SK-N-SH (cell line): ENCODE measurements at regions of chr10 and their contacts with region 1.

Region 1: DNA sequence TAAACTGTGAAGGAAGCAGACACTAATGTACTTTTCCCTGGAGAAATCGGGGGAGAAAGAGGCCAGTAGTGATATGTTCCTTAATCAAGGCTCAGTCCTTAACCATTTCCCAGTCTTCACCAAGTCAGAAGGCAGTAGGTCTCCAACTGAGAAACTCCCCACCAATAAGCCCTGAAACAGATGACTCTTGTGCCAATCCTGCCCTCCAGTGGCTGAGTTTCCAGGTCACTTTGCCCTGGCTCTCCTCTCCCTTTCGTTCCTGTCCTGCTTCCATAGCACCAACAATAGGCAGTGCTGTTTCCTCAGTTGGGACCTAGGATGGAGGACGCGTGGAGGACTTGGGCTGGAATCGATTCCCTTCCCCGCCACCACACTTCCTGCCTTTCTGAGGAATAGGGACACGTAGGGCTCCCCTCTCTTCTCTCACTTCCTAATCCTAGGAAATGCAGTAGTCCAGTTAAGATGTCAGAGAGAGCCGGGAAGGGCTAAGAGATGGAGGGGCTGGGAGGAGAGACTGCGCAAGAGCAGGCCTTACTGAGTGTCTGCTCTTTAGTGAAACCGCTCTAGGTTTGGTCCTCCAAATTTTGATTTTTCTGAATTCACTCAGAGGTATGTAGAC is 23.4 kb downstream of the ATOH7 start:
- DNase-seq: peak; percentile 49
- H3K4me3 ChIP-seq: no peak overlapping the region
- H3K27ac ChIP-seq: no peak overlapping the region
- H3K4me1 ChIP-seq: no peaks in the 10 kb centered on the region
- H3K27me3 ChIP-seq: no peaks in the 10 kb centered on the region
- CTCF ChIP-seq: peak; percentile 68
- EP300 ChIP-seq: no peak
- RAD21 ChIP-seq: peak; percentile 82

Region 2: GRCh38 chr10:67827811-67828210 is 380.7 kb before region 1 on chr10:
- CTCF ChIA-PET with region 1: no interaction called
- POLR2A ChIA-PET with region 1: no interaction called
- DNase-seq: no peak
- H3K4me3 ChIP-seq: no peak overlapping the region
- H3K27ac ChIP-seq: no peak overlapping the region
- H3K4me1 ChIP-seq: no peaks in the 10 kb centered on the region; a peak in 1 of 4 replicates
- H3K27me3 ChIP-seq: no peaks in the 10 kb centered on the region
- CTCF ChIP-seq: no peak
- EP300 ChIP-seq: no peak
- RAD21 ChIP-seq: no peak

Region 3: DNA sequence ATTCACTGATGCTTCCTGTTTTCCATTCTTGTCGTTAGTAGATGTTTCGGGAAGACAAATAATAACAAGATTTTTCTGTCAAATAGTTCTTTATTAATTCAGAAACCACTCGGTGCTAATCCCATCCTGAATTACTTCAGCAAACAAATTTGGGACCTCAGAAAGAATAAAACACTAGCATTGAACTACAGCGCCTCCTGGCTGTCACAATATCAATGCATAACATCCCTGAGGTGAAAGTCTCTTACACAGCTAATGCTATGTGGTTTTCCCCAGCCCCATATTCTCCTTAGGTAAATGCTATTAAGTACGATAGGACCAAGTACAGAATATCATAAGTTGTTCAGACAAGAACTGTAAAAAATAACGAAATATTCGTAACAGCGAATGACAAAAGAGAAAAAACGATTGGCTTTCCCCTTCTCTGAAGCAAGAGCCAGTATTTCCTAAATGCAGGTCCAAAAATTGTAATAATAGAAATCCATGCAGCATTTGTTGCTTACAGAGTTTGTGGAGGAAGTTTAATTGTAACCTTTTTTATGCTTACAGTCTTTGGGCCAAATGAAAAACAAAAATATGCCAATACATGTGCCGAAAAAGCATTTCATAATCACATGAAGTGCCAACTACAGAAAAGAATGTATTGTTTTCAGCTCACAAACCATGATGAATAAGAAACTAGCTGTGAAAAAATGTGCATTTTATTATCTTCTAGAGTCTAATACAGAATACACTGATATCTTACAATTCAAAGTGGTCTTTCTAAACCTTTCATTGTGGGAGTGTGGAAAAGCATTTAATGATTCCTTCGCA is 52.0 kb before region 1 on chr10:
- CTCF ChIA-PET with region 1: interaction called, 15 read pairs
- POLR2A ChIA-PET with region 1: no interaction called
- DNase-seq: peak; percentile 35
- H3K4me3 ChIP-seq: no peak overlapping the region; a peak in 1 of 4 replicates
- H3K27ac ChIP-seq: no peak overlapping the region
- H3K4me1 ChIP-seq: peaks cover 11 to 27% of the 10 kb centered on the region in 2 experiments; a peak in 3 of 4 replicates
- H3K27me3 ChIP-seq: no peaks in the 10 kb centered on the region
- CTCF ChIP-seq: peak; percentile 93
- EP300 ChIP-seq: no peak
- RAD21 ChIP-seq: peak; percentile 86

Region 4: GRCh38 chr10:68231106-68231816 is 22.7 kb after region 1 on chr10:
- CTCF ChIA-PET with region 1: interaction called, 16 read pairs
- POLR2A ChIA-PET with region 1: no interaction called
- DNase-seq: peak; percentile 98
- H3K4me3 ChIP-seq: peak overlapping the region; percentile 59 to 68
- H3K27ac ChIP-seq: peak overlapping the region; percentile 42 to 84; a peak in 3 of 4 replicates
- H3K4me1 ChIP-seq: peaks cover 0 to 4% of the 10 kb centered on the region in 2 experiments; a peak in 2 of 4 replicates
- H3K27me3 ChIP-seq: no peaks in the 10 kb centered on the region; the same call in 1 of the 2 replicates
- CTCF ChIP-seq: no peak
- EP300 ChIP-seq: no peak
- RAD21 ChIP-seq: no peak

Region 5: DNA sequence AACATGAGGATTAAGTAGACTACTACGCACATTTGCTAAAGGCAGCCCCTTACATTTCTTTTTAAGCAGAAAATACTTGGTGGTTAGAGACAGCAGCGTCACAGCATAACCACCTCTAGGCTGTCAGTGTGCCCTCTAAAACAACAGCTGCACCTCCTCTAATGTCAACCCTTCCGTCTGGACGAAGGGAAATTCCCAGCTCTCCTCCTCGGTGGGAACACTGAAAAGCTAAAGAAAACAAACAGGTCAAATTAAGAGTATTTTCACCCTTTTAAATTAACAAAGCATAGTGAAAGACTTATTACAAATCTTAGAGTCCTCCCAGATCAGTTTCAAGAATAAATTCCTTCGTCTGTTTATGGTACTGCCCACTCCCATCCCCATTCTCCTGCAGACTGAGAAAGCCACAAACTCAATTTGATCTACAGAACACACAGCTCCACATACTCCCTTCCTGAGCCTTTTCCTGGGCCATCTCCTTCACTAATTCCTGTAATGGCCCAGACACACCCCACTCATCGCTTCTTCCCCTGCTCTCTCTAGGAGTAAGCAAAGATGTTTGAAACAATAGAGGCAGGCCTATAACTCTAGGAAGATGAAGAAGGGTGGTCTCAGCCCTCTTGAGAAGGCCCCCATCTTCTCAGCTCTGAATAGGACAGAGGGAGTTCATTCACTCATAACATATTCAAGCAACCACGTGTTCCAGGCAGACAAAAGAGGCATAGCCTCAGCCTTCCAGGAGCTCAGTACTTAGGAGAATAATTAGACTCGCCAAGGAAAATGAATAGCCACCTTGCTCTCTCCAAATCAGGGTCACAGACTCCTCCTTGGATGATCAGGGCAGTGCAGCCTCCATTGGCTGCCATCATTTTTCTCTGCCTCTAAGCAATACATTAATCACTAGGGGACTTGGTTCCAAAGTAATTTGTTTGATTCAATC is 75.8 kb after region 1 on chr10:
- CTCF ChIA-PET with region 1: interaction called, 14 read pairs
- POLR2A ChIA-PET with region 1: no interaction called
- DNase-seq: no peak
- H3K4me3 ChIP-seq: no peak overlapping the region
- H3K27ac ChIP-seq: no peak overlapping the region
- H3K4me1 ChIP-seq: no peaks in the 10 kb centered on the region
- H3K27me3 ChIP-seq: no peaks in the 10 kb centered on the region
- CTCF ChIP-seq: no peak
- EP300 ChIP-seq: no peak
- RAD21 ChIP-seq: no peak

Region 6: GRCh38 chr10:68331455-68332258 is 123.1 kb after region 1 on chr10 and contains the start of gene HNRNPH3:
- CTCF ChIA-PET with region 1: interaction called, 18 read pairs
- POLR2A ChIA-PET with region 1: interaction called, 3 read pairs
- DNase-seq: peak; percentile 95
- H3K4me3 ChIP-seq: peak within 1 kb of the TSS; percentile 85 to 91
- H3K27ac ChIP-seq: peak within 1 kb of the TSS; percentile 95 to 98
- H3K4me1 ChIP-seq: peaks cover 27 to 35% of the 10 kb centered on the region in 2 experiments
- H3K27me3 ChIP-seq: no peaks in the 10 kb centered on the region
- CTCF ChIP-seq: 0 out of 2 replicates have a peak, but pooled peaks have one; percentile 14
- EP300 ChIP-seq: 0 out of 4 replicates have a peak, but pooled peaks of 1 of the 2 experiments have one; percentile 3
- RAD21 ChIP-seq: no peak
- polyA plus RNA-seq, gene HNRNPH3: 58.4 and 73.0 TPM in 2 replicates

Region 7: DNA sequence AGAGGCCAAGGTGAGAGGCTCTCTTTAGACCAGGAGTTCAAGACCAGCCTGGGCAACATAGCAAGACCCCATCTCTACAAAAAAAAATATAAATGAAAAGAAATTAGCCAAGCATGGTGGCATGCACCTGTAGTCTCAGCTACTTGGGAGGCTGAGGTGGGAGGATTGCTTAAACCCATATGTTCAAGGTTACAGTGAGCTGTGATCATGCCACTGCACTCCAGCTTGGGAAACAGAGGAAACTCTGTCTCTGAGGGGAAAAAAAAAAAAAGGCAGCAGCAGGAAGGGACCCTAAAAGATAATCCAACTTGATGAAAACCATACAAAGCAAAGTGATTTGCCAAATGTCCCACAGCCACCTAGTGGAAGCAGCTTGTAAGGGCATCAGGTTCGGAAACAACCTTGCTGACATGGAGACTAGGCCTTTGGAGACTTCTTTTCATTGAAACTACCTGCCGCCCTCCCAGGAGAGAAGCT is 139.8 kb after region 1 on chr10:
- CTCF ChIA-PET with region 1: interaction called, 13 read pairs
- POLR2A ChIA-PET with region 1: no interaction called
- DNase-seq: peak; percentile 45
- H3K4me3 ChIP-seq: no peak overlapping the region; a peak in 1 of 4 replicates
- H3K27ac ChIP-seq: peak overlapping the region in 1 of 2 experiments; percentile 26; a peak in 1 of 4 replicates
- H3K4me1 ChIP-seq: no peaks in the 10 kb centered on the region
- H3K27me3 ChIP-seq: no peaks in the 10 kb centered on the region
- CTCF ChIP-seq: peak; percentile 73
- EP300 ChIP-seq: no peak
- RAD21 ChIP-seq: peak; percentile 67